ENCODE measurements at regions of chr7 and their contacts with region 1.

Region 1: GRCh38 chr7:66930341-66930740 is 9.3 kb downstream of the TMEM248 start:
- DNase-seq: no peak
- ATAC-seq: peak; percentile 46
- H3K4me3 ChIP-seq: no peak overlapping the region
- H3K27ac ChIP-seq: no peak overlapping the region
- H3K4me1 ChIP-seq: no peaks in the 10 kb centered on the region
- H3K27me3 ChIP-seq: no peaks in the 10 kb centered on the region
- CTCF ChIP-seq: no peak

Region 2: DNA sequence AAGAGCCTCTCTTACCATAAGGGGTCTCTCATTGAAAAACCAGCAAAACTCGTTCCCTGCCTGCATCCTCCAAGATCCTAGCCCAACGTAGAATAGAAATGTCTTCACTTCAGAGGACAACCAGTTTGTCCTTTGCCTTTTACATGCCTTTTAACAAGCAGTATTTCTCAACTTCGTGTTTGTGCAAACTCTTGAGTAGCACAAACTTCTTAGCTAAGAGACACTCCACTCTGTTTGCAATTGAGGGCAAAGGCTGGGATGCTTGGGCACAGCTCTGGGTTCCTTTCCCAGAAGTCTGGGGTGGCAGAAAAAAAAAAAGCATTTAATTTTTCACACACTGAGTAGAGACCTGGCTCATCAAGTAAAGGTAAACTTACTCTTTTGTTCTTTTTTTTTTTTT is 321.2 kb before region 1 on chr7:
- CTCF ChIA-PET with region 1: no interaction called
- POLR2A ChIA-PET with region 1: interaction called, 10 read pairs
- in situ Hi-C with region 1: no loop called
- intact Hi-C with region 1: no loop called
- DNase-seq: no peak
- ATAC-seq: no peak
- H3K4me3 ChIP-seq: no peak overlapping the region
- H3K27ac ChIP-seq: no peak overlapping the region
- H3K4me1 ChIP-seq: no peaks in the 10 kb centered on the region
- H3K27me3 ChIP-seq: no peaks in the 10 kb centered on the region
- CTCF ChIP-seq: no peak

Region 3: GRCh38 chr7:66751950-66752349 is 178.4 kb before region 1 on chr7:
- CTCF ChIA-PET with region 1: no interaction called
- POLR2A ChIA-PET with region 1: interaction called, 21 read pairs
- in situ Hi-C with region 1: no loop called
- intact Hi-C with region 1: no loop called
- DNase-seq: no peak
- ATAC-seq: no peak
- H3K4me3 ChIP-seq: no peak overlapping the region
- H3K27ac ChIP-seq: no peak overlapping the region
- H3K4me1 ChIP-seq: peaks cover 10% of the 10 kb centered on the region; the same call in 1 of the 2 replicates
- H3K27me3 ChIP-seq: no peaks in the 10 kb centered on the region
- CTCF ChIP-seq: no peak

Region 4: GRCh38 chr7:66859794-66860645 is 70.3 kb before region 1 on chr7:
- CTCF ChIA-PET with region 1: no interaction called
- POLR2A ChIA-PET with region 1: interaction called, 11 read pairs
- in situ Hi-C with region 1: no loop called
- intact Hi-C with region 1: no loop called
- DNase-seq: no peak
- ATAC-seq: peak; percentile 45; the same call in 1 of the 2 replicates
- H3K4me3 ChIP-seq: no peak overlapping the region
- H3K27ac ChIP-seq: no peak overlapping the region
- H3K4me1 ChIP-seq: no peaks in the 10 kb centered on the region
- H3K27me3 ChIP-seq: no peaks in the 10 kb centered on the region
- CTCF ChIP-seq: no peak

Measured in Panc1 (cell line).